ENCODE measurements at regions of chr2 and their contacts with region 1.

Region 1: GRCh38 chr2:232854082-232854481 is 16.0 kb upstream of the SNORC start:
- DNase-seq: no peak
- ATAC-seq: no peak
- H3K4me3 ChIP-seq: no peak overlapping the region
- H3K27ac ChIP-seq: no peak overlapping the region
- H3K4me1 ChIP-seq: peaks cover 58% of the 10 kb centered on the region
- H3K27me3 ChIP-seq: no peaks in the 10 kb centered on the region
- CTCF ChIP-seq: no peak
- EP300 ChIP-seq: no peak
- POLR2A ChIP-seq: no peak
- RAD21 ChIP-seq: no peak

Region 2: DNA sequence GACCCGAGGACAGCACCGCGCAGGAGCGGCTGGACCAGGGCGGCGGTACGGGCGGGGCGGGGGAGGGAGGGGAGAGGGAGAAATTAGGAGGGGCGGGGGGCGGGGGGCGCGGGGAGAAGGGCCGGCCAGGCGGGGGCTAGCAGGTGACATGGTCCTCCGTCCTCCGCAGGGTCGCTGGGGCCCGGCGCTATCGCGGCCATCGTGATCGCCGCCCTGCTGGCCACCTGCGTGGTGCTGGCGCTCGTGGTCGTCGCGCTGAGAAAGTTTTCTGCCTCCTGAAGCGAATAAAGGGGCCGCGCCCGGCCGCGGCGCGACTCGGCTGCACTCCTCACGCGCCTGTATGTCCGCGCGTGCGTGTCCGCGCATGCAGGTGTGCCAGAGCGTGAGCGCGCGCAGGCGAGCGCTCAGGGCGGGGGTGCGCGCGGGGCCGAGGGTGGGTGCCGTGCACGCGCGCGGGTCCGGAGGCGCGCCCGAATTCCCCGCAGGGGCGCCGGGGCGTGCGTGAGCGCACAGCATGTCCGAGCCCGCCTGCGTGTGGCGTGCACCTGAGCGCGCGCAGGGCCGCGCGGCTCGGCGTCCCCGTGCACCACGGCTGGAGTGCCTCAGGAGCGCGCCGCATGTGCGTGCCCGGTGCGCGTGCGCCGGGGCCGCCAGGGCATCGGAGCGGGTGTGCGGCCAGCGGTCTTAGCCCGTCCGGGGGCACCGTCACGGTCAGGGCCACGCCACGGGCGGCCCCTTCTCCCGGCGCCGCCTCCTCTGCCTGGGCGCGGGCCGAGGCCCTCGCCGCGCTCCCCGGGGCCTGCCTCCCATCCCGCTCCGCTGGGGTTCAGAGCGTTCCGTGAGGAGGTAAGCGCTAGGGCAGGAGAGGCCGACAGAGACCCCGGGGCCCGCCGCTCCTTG is 22.2 kb after region 1 on chr2:
- CTCF ChIA-PET with region 1: no interaction called
- POLR2A ChIA-PET with region 1: interaction called, 297 read pairs
- in situ Hi-C with region 1: no loop called
- intact Hi-C with region 1: loop called (anchors 1 kb)
- DNase-seq: no peak
- ATAC-seq: peak; percentile 28
- H3K4me3 ChIP-seq: peak overlapping the region; percentile 67 to 82 (median 71)
- H3K27ac ChIP-seq: peak overlapping the region; percentile 94
- H3K4me1 ChIP-seq: peaks cover 89% of the 10 kb centered on the region
- H3K27me3 ChIP-seq: no peaks in the 10 kb centered on the region
- CTCF ChIP-seq: peak; percentile 57
- EP300 ChIP-seq: peak in 1 of 2 experiments; percentile 36; a peak in 1 of 4 replicates
- POLR2A ChIP-seq: no peak; a peak in 1 of 4 replicates
- RAD21 ChIP-seq: peak; percentile 51; the same call in 1 of the 2 replicates

Region 3: DNA sequence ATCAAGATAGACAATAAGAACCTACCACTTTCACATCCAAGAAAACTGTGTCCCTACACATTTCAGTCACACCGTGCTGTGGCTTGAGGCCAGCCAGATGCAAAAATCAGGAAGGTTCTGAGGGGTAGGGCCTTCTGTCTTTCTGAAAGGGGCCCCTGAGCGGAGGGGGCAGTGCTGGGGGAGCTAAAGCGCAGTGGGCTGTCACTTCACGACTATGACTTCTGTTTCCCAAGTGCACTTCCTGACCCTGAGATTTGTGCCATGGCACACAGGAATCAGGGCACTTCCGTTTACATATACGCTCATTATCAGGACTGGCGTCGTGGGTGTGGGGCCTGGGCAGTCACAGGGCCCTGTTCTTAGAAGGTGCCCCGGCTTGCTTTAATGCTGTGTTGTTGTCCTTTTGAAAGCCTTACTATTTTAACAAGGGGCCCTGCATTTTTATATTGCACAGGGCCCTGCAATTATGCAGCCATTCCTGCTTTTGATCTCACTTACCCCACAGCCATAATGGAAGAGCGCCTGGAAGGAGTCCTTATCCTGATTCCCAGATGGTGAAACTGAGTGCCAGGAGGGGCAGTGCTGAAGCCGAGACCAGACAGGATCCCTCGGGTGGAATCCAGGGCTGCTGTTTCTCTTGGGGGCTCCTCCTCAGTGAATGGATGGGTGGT is 158.4 kb after region 1 on chr2:
- CTCF ChIA-PET with region 1: no interaction called
- POLR2A ChIA-PET with region 1: interaction called, 16 read pairs
- in situ Hi-C with region 1: no loop called
- intact Hi-C with region 1: no loop called
- DNase-seq: peak; percentile 65
- ATAC-seq: peak; percentile 53
- H3K4me3 ChIP-seq: peak overlapping the region; percentile 66 to 93 (median 80)
- H3K27ac ChIP-seq: peak overlapping the region; percentile 93
- H3K4me1 ChIP-seq: peaks cover 42% of the 10 kb centered on the region
- H3K27me3 ChIP-seq: no peaks in the 10 kb centered on the region; a peak in 1 of 5 replicates
- CTCF ChIP-seq: no peak
- EP300 ChIP-seq: peak in 1 of 2 experiments; percentile 55; a peak in 1 of 4 replicates
- POLR2A ChIP-seq: peak; percentile 34 to 42; a peak in 1 of 4 replicates
- RAD21 ChIP-seq: no peak

Region 4: DNA sequence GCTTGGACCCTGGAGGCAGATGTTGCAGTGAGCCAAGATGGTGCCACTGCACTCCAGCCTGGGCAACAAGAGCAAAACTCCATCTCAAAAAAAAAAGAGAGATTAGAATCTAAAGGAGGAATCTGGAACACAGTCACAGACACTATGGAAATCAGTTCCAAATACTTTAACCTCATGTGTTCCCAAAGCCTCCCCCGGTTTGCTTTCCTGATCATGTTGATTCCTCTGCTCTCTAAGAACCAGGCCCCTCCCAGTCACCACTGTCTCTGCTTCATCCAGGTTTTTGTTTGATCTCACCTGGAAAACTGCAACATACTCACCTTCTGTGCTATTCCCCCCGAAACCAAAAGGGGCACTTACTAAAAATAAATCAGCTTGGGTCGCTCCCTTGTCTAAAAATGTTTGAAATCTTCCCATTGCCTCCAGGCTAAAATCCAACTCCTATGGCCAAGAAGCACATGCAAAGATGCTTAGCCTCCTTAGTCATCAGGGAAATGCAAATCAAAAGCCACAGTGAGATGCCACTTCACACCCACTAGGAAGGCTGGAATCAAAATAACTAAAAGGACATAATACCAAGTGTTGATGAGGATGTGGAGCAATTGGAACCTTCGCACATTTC is 172.2 kb after region 1 on chr2:
- CTCF ChIA-PET with region 1: interaction called, 20 read pairs
- POLR2A ChIA-PET with region 1: interaction called, 8 read pairs
- in situ Hi-C with region 1: loop called (anchors 10 kb)
- intact Hi-C with region 1: loop called (anchors 1 kb)
- DNase-seq: no peak
- ATAC-seq: no peak
- H3K4me3 ChIP-seq: no peak overlapping the region
- H3K27ac ChIP-seq: no peak overlapping the region
- H3K4me1 ChIP-seq: peaks cover 3% of the 10 kb centered on the region; the same call in 1 of the 2 replicates
- H3K27me3 ChIP-seq: peaks cover 3 to 19% of the 10 kb centered on the region in 2 experiments; a peak in 4 of 5 replicates
- CTCF ChIP-seq: no peak
- EP300 ChIP-seq: no peak
- POLR2A ChIP-seq: no peak
- RAD21 ChIP-seq: no peak

Region 5: GRCh38 chr2:233053928-233054784 is 200.1 kb after region 1 on chr2:
- CTCF ChIA-PET with region 1: interaction called, 19 read pairs
- POLR2A ChIA-PET with region 1: interaction called, 40 read pairs
- in situ Hi-C with region 1: loop called (anchors 5 kb)
- intact Hi-C with region 1: loop called (anchors 1 kb)
- DNase-seq: peak; percentile 43
- ATAC-seq: peak; percentile 90
- H3K4me3 ChIP-seq: no peak overlapping the region
- H3K27ac ChIP-seq: no peak overlapping the region
- H3K4me1 ChIP-seq: peaks cover 22% of the 10 kb centered on the region
- H3K27me3 ChIP-seq: peaks cover 0 to 26% of the 10 kb centered on the region in 2 experiments; a peak in 4 of 5 replicates
- CTCF ChIP-seq: peak; percentile 98
- EP300 ChIP-seq: no peak
- POLR2A ChIP-seq: no peak
- RAD21 ChIP-seq: peak; percentile 89

Measured in HepG2 (cell line).